Activated CD8-positive, alpha-beta T cell treated with anti-CD3 and anti-CD28 coated beads for 36 hours (primary cell): ENCODE measurements at regions of chr12 and their contacts with region 1.

Region 1: GRCh38 chr12:66301944-66302826 is at the start of gene HELB:
- DNase-seq: peak; percentile 99
- ATAC-seq: peak; percentile 88
- H3K4me3 Mint-ChIP-seq: peak within 1 kb of the TSS; percentile 100
- H3K27ac Mint-ChIP-seq: peak within 1 kb of the TSS; percentile 100
- H3K4me1 Mint-ChIP-seq: peaks cover 38% of the 10 kb centered on the region
- H3K27me3 Mint-ChIP-seq: no peaks in the 10 kb centered on the region
- CTCF ChIP-seq: no peak
- total RNA-seq, gene HELB: 16.1 to 16.2 TPM

Region 2: GRCh38 chr12:66035288-66035966 is 266.8 kb before region 1 on chr12:
- CTCF ChIA-PET with region 1: no interaction called
- POLR2A ChIA-PET with region 1: no interaction called
- intact Hi-C with region 1: no loop called
- DNase-seq: no peak
- ATAC-seq: no peak
- H3K4me3 Mint-ChIP-seq: no peak overlapping the region
- H3K27ac Mint-ChIP-seq: no peak overlapping the region
- H3K4me1 Mint-ChIP-seq: no peaks in the 10 kb centered on the region
- H3K27me3 Mint-ChIP-seq: peaks cover 24% of the 10 kb centered on the region
- CTCF ChIP-seq: peak; percentile 59

Region 3: GRCh38 chr12:66169221-66170170 is 132.7 kb before region 1 on chr12 and contains the start of gene TMBIM4:
- CTCF ChIA-PET with region 1: interaction called, 3 read pairs
- POLR2A ChIA-PET with region 1: interaction called, 11 read pairs
- intact Hi-C with region 1: loop called (anchors 10 kb)
- DNase-seq: peak; percentile 89
- ATAC-seq: peak; percentile 83
- H3K4me3 Mint-ChIP-seq: peak within 1 kb of the TSS; percentile 85
- H3K27ac Mint-ChIP-seq: peak within 1 kb of the TSS; percentile 100
- H3K4me1 Mint-ChIP-seq: peaks cover 39% of the 10 kb centered on the region
- H3K27me3 Mint-ChIP-seq: no peaks in the 10 kb centered on the region
- CTCF ChIP-seq: peak; percentile 18
- total RNA-seq, gene TMBIM4: 41.7 to 45.8 TPM

Region 4: DNA sequence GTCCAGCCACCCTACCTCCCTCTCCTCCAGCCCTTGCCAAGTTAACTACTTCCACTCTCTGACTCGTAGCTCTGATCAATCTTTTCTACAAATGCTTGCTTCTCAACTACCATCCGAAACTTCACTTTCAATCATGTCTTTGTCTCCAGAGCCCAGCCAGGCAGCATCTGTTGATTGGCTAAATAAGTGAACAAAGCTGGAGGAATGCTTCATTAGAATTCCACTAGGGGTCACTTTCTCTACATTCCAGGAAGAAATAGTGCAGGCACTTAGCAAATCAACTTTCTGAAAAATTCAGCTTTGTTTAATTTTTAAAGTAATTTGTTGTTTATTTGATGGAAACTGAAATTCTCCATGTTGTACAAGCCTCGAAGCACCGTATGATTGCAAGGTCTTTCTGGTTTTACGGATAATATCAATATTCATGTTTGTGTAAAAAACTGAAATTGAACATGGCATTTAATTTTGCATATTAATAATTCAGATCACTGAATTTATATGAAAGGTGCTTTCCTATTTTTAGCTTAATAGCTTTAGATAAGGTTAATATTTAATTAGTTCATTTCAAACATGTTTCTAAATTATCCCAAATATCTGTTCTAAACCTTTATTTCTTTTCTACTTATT is 32.3 kb before region 1 on chr12:
- CTCF ChIA-PET with region 1: interaction called, 12 read pairs
- POLR2A ChIA-PET with region 1: no interaction called
- intact Hi-C with region 1: no loop called
- DNase-seq: peak; percentile 29
- ATAC-seq: peak; percentile 65
- H3K4me3 Mint-ChIP-seq: no peak overlapping the region
- H3K27ac Mint-ChIP-seq: no peak overlapping the region
- H3K4me1 Mint-ChIP-seq: no peaks in the 10 kb centered on the region
- H3K27me3 Mint-ChIP-seq: peaks cover 3% of the 10 kb centered on the region
- CTCF ChIP-seq: peak; percentile 58

Region 5: GRCh38 chr12:66279123-66279712 is 23.0 kb before region 1 on chr12:
- CTCF ChIA-PET with region 1: interaction called, 3 read pairs
- POLR2A ChIA-PET with region 1: interaction called, 10 read pairs
- intact Hi-C with region 1: no loop called
- DNase-seq: peak; percentile 51
- ATAC-seq: peak; percentile 68
- H3K4me3 Mint-ChIP-seq: no peak overlapping the region
- H3K27ac Mint-ChIP-seq: no peak overlapping the region
- H3K4me1 Mint-ChIP-seq: peaks cover 29% of the 10 kb centered on the region
- H3K27me3 Mint-ChIP-seq: no peaks in the 10 kb centered on the region
- CTCF ChIP-seq: peak; percentile 57

Region 6: GRCh38 chr12:66288121-66288520 is 14.1 kb before region 1 on chr12:
- CTCF ChIA-PET with region 1: interaction called, 6 read pairs
- POLR2A ChIA-PET with region 1: interaction called, 10 read pairs
- intact Hi-C with region 1: no loop called
- DNase-seq: peak; percentile 59
- ATAC-seq: peak; percentile 92
- H3K4me3 Mint-ChIP-seq: peak overlapping the region; percentile 9
- H3K27ac Mint-ChIP-seq: peak overlapping the region; percentile 44
- H3K4me1 Mint-ChIP-seq: peaks cover 60% of the 10 kb centered on the region
- H3K27me3 Mint-ChIP-seq: no peaks in the 10 kb centered on the region
- CTCF ChIP-seq: no peak

Region 7: DNA sequence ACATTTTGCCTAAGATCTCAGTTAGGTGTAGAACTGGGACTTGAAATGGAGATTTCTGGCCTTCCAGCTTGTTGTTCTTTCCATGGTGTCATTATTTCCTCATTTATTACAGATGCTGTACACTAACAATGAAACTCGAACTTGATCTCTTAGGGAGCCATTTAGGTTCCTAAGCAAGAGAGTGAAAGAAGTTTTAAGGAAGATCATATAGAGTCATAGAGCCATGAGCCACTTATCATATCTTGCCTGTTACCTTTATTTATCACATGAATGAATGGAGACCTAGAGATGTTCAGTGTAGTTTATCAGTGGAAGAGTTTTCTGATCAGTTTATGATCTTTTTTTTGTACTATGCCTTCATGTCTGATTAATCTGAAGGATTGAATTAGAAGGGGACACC is 10.0 kb after region 1 on chr12:
- CTCF ChIA-PET with region 1: interaction called, 3 read pairs
- POLR2A ChIA-PET with region 1: interaction called, 13 read pairs
- intact Hi-C with region 1: no loop called
- DNase-seq: no peak
- ATAC-seq: no peak
- H3K4me3 Mint-ChIP-seq: no peak overlapping the region
- H3K27ac Mint-ChIP-seq: peak overlapping the region; percentile 11
- H3K4me1 Mint-ChIP-seq: peaks cover 62% of the 10 kb centered on the region
- H3K27me3 Mint-ChIP-seq: no peaks in the 10 kb centered on the region
- CTCF ChIP-seq: no peak

Region 8: DNA sequence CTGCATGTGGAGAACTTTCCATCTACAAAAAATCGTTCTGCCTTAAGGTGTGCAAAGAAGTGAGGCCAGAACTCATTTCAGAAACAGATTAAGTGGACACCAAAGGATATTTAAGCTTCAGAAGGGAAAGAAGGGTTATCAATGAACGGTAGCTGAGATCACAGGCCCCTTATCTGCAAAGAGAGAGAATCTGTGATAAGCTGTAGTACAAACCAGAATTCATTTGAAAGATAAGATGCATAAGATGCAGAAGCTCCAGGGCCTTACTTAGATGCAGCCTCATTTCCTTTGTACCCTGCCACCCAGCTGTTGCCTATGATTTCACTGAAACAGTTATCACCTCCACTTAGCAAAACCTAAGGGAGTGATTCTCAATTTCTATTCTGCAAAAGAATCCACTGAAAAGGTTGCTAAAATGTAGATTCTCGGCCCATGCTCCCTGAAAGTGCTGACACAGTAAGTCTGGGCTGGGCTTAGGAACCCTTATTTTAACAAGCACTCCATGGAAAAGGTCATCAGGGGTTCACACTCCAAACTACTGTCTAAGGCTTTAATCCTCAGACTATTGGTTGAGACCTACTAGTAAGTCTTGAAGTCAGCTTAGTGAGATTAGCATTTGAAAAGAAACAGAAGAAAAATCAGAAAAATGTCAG is 65.0 kb after region 1 on chr12:
- CTCF ChIA-PET with region 1: no interaction called
- POLR2A ChIA-PET with region 1: no interaction called
- intact Hi-C with region 1: no loop called
- DNase-seq: no peak
- ATAC-seq: no peak
- H3K4me3 Mint-ChIP-seq: no peak overlapping the region
- H3K27ac Mint-ChIP-seq: no peak overlapping the region
- H3K4me1 Mint-ChIP-seq: no peaks in the 10 kb centered on the region
- H3K27me3 Mint-ChIP-seq: no peaks in the 10 kb centered on the region
- CTCF ChIP-seq: no peak